ENCODE measurements at regions of chr11 and their contacts with region 1.

Region 1: GRCh38 chr11:2519862-2520735 is 75.3 kb downstream of the KCNQ1 start:
- DNase-seq: peak; percentile 4 to 52 (median 18)
- ATAC-seq: no peak
- H3K4me3 ChIP-seq: no peak overlapping the region
- H3K27ac ChIP-seq: no peak overlapping the region
- H3K4me1 ChIP-seq: peaks cover 0 to 27% (median 11%) of the 10 kb centered on the region in 12 donors
- H3K27me3 ChIP-seq: no peaks in the 10 kb centered on the region
- CTCF ChIP-seq: no peak
- POLR2A ChIP-seq: no peak

Region 2: DNA sequence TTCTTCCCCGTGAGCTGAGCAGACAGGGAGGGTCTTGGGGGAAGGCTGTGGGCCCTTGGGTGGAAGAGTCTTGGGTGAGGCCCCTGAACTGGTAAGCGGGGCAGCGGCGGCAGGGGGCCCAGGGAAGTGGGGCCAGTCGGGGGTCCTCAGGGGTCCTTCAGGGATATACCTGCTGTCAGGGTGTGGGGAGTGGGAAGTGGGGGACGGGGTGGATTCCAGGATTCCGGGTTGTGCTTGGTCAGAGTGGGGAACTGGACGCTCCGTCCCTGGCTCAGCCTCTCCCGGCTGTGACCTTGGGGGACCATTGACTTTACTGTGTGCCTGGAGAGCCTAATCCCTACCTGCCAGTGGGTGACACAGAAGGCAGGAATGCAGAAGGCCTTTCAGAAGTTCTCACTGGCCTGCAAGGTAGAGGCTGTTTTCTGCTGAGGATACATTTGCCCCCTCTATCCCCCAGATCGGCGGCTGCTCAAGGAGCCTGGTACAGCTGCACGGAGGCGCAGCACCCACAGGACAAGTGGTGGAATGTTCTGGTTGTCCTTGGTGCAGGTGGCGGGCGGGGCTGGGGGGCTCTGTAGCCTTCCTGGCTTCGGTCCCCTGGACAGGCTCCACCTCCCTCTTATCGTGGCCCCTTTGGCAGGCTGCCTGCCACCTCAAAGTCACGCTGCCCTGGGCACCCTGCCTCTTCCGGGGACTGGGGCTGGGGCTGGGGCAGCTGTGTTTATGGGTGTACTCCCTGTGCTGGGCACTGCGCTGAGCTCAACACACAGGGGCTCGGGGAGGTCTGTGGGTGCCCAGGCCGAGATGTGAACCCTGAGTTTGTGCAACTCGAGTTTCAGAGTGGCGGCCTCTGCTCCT is 57.0 kb before region 1 on chr11:
- intact Hi-C with region 1: loop called in 1 of 10 experiments (anchors 5 kb)
- DNase-seq: peak; percentile 81 to 90 (median 88)
- ATAC-seq: peak; percentile 79 to 90 (median 86)
- H3K4me3 ChIP-seq: peak overlapping the region in 2 of 12 donors; percentile 2 to 8
- H3K27ac ChIP-seq: peak overlapping the region; percentile 79 to 97 (median 89)
- H3K4me1 ChIP-seq: peaks cover 0 to 91% (median 37%) of the 10 kb centered on the region in 12 donors
- H3K27me3 ChIP-seq: no peaks in the 10 kb centered on the region
- CTCF ChIP-seq: no peak
- POLR2A ChIP-seq: peak in 1 of 2 donors; percentile 29